Ovary (tissue), 10 donors: ENCODE measurements at regions of chr5 and their contacts with region 1.

Region 1: GRCh38 chr5:179166886-179167841 is 107.0 kb downstream of the ZNF354C start:
- DNase-seq: peak; percentile 69 to 83 (median 76)
- H3K4me3 ChIP-seq: peak overlapping the region; percentile 16
- H3K27ac ChIP-seq: no peak overlapping the region
- H3K4me1 ChIP-seq: no peaks in the 10 kb centered on the region
- H3K27me3 ChIP-seq: no peaks in the 10 kb centered on the region
- CTCF ChIP-seq: peak; percentile 79 to 97 (median 96)
- EP300 ChIP-seq: no peak
- POLR2A ChIP-seq: no peak

Region 2: GRCh38 chr5:179187229-179187678 is 20.1 kb after region 1 on chr5:
- intact Hi-C with region 1: no loop called
- DNase-seq: no peak
- H3K4me3 ChIP-seq: no peak overlapping the region
- H3K27ac ChIP-seq: no peak overlapping the region
- H3K4me1 ChIP-seq: peaks cover 5% of the 10 kb centered on the region
- H3K27me3 ChIP-seq: no peaks in the 10 kb centered on the region
- CTCF ChIP-seq: no peak
- EP300 ChIP-seq: no peak
- POLR2A ChIP-seq: no peak

Region 3: GRCh38 chr5:179404321-179405053 is 237.3 kb after region 1 on chr5:
- intact Hi-C with region 1: loop called in 1 of 4 experiments (anchors 10 kb)
- DNase-seq: no peak
- H3K4me3 ChIP-seq: no peak overlapping the region
- H3K27ac ChIP-seq: no peak overlapping the region
- H3K4me1 ChIP-seq: peaks cover 4% of the 10 kb centered on the region
- H3K27me3 ChIP-seq: no peaks in the 10 kb centered on the region
- CTCF ChIP-seq: no peak
- EP300 ChIP-seq: no peak
- POLR2A ChIP-seq: no peak

Region 4: DNA sequence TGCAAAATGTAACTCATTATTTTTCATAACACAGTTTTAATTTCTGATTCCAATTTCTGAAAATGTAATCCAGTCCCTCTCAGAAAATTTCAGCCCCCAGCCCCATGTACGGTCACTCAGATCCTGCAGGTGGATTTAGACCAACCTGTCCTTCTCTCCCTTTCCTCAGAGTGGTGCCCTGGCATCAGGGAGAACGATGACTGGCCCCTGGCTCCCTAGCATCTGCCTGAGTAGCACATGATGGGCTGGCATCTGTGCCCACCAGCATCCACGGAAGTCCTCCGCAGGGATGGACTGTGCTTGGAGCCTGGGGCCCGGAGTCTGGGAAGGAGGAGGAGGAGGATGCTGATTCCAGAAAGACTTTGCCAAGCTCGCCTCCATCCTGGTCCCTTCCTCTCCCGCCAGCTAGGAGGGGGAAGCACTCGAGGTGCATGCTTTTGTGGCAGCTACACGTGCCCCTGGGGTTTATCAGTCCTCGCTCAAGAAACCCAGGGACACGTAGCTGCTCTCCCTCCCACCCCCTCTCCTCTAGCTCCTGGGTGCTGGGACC is 328.8 kb after region 1 on chr5:
- intact Hi-C with region 1: loop called (anchors 2 to 5 kb)
- DNase-seq: no peak
- H3K4me3 ChIP-seq: no peak overlapping the region
- H3K27ac ChIP-seq: no peak overlapping the region
- H3K4me1 ChIP-seq: no peaks in the 10 kb centered on the region
- H3K27me3 ChIP-seq: no peaks in the 10 kb centered on the region
- CTCF ChIP-seq: no peak
- EP300 ChIP-seq: no peak
- POLR2A ChIP-seq: no peak